Kidney (tissue), 22 donors: ENCODE measurements at regions of chr19 and their contacts with region 1.

Region 1: DNA sequence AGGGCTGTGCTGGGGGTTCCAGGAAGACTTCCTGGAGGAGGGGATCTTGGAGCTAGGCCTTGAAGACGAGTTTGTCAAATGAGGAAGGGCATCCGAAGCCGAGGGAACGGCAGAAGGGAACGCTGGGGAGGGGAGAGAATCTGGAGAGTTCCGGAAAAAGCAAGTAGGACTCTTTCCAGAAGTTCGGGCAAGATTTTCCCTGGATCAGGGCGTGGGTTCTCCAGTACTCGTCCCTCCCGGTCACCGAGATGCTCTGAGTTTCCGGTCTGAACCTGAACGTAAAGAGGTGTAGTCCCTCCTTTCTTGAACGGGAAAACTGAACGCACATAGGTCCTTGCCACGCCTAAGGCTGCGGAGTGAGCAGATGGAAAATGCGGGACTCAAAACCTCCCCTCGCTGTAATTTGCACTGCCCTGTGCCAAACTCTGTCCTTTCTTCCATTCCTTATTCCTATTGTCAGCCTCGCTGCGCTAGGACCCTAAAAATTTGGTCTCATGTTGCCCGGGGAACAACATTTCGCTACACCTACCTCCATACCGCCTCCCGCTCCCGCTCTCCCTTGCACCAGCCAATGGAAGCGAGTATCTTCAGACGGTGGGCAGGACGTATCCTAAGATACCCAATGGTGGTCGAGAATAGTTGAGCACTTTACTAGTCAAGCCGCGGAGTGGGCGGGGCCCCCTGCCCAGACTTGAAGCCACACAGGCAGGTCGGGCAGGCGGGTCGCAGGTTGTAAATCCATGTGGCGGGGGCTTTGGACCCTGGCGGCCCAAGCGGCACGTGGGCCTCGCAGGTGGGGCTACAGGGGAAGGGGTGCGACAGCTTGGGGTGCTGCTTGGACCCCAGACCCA is at the start of gene GTPBP3:
- DNase-seq: peak; percentile 97 to 99 (median 99)
- H3K4me3 ChIP-seq: peak within 1 kb of the TSS; percentile 87 to 98 (median 95)
- H3K27ac ChIP-seq: peak within 1 kb of the TSS; percentile 95 to 99
- H3K4me1 ChIP-seq: peaks cover 0 to 24% (median 0%) of the 10 kb centered on the region in 3 donors
- H3K27me3 ChIP-seq: no peaks in the 10 kb centered on the region
- CTCF ChIP-seq: no peak
- total RNA-seq, gene GTPBP3: 20.4 TPM

Region 2: GRCh38 chr19:17469481-17470067 is 132.5 kb after region 1 on chr19:
- intact Hi-C with region 1: loop called (anchors 10 kb)
- DNase-seq: peak; percentile 93 to 99 (median 97)
- H3K4me3 ChIP-seq: peak overlapping the region; percentile 73 to 93 (median 80)
- H3K27ac ChIP-seq: peak overlapping the region; percentile 89 to 93
- H3K4me1 ChIP-seq: peaks cover 0 to 22% (median 4%) of the 10 kb centered on the region in 3 donors
- H3K27me3 ChIP-seq: no peaks in the 10 kb centered on the region
- CTCF ChIP-seq: no peak